ENCODE measurements at regions of chr3 and their contacts with region 1.

Region 1: GRCh38 chr3:28334552-28334951 is 14.0 kb upstream of the ZCWPW2 start:
- DNase-seq: no peak
- H3K4me3 ChIP-seq: no peak overlapping the region
- H3K4me3 Mint-ChIP-seq: no peak overlapping the region
- H3K27ac ChIP-seq: no peak overlapping the region
- H3K27ac Mint-ChIP-seq: peak overlapping the region in 2 of 8 donors; percentile 13 to 64
- H3K4me1 ChIP-seq: peaks cover 6% of the 10 kb centered on the region
- H3K4me1 Mint-ChIP-seq: peaks cover 5 to 25% (median 25%) of the 10 kb centered on the region in 3 donors
- H3K27me3 ChIP-seq: no peaks in the 10 kb centered on the region
- H3K27me3 Mint-ChIP-seq: no peaks in the 10 kb centered on the region

Region 2: DNA sequence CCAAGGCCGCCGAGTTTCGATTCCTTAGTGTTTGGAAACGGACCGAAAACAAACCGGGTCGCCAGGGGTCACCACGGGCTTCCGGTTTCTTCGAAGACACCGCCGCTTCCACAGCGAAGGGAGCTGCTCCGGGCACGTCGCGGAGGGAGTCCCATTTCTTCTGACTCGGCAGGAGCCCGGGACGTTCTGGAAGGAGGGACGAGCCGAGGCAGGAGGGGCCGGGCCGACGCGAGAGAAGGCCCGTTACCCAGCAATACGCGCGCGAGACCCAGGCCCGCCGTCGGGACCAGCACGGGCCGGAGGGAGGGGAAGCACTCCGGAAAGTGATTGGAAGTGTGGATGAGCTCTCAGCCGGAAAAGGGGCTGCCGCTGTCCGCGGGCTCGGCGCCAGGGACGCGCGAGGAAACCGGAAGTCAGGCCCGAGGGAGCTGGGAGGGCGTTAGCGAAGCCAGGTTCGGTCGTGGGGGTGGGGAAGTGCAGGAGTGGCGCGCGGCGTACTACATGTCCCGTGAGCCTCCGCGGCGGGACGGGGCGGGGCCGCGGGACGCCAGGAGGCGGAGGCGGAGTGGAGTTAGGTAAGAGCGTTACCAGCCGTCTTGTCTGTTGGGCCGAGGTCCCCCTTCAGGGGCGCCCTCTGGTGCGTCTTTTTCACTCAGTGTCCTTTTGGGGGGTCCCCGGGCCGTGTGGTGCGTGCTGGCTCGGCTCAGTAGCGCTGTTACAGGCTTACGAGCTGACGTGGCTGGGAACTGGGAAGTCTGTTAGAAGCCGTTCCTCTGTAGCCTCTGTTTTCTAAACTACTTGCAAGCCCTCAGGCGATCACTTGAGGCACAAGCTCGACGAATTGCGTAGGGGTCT is 14.3 kb after region 1 on chr3 and contains the starts of genes AZI2 and ZCWPW2:
- CTCF ChIA-PET with region 1: interaction called, 19 read pairs
- POLR2A ChIA-PET with region 1: no interaction called
- DNase-seq: peak; percentile 87 to 95 (median 90)
- H3K4me3 ChIP-seq: peak within 1 kb of the TSS; percentile 92
- H3K4me3 Mint-ChIP-seq: peak within 1 kb of the TSS; percentile 96 to 100 (median 98)
- H3K27ac ChIP-seq: peak within 1 kb of the TSS; percentile 97
- H3K27ac Mint-ChIP-seq: peak within 1 kb of the TSS; percentile 95 to 100 (median 99)
- H3K4me1 ChIP-seq: peaks cover 34% of the 10 kb centered on the region
- H3K4me1 Mint-ChIP-seq: peaks cover 55 to 74% (median 68%) of the 10 kb centered on the region in 3 donors
- H3K27me3 ChIP-seq: no peaks in the 10 kb centered on the region
- H3K27me3 Mint-ChIP-seq: no peaks in the 10 kb centered on the region
- total RNA-seq, gene AZI2: 34.5 to 36.4 TPM
- total RNA-seq, gene ZCWPW2: 0.20 to 0.27 TPM

Region 3: GRCh38 chr3:28376424-28376823 is 41.9 kb after region 1 on chr3:
- CTCF ChIA-PET with region 1: no interaction called
- POLR2A ChIA-PET with region 1: no interaction called
- DNase-seq: no peak
- H3K4me3 ChIP-seq: no peak overlapping the region
- H3K4me3 Mint-ChIP-seq: no peak overlapping the region
- H3K27ac ChIP-seq: no peak overlapping the region
- H3K27ac Mint-ChIP-seq: no peak overlapping the region
- H3K4me1 ChIP-seq: no peaks in the 10 kb centered on the region
- H3K4me1 Mint-ChIP-seq: no peaks in the 10 kb centered on the region
- H3K27me3 ChIP-seq: no peaks in the 10 kb centered on the region
- H3K27me3 Mint-ChIP-seq: peaks cover 4 to 34% of the 10 kb centered on the region in 2 donors

Region 4: DNA sequence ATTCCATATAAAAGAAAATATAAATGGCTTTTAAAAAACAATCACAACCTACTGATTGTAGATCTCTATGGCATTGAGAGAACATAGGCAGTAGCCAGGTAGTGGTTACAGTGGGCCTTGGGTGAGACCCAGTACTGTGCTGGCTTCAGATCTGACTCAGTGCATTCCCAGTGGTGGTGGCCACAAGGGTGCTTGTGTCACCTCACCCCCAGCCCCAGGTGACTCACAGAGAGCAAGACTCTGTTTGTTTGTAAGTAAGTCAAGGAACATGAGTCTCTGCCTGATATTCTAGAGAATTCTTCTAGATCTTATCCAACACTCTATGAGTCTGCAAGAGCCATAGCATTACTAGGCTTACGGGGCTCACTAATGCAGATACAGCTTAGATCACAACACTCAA is 132.9 kb after region 1 on chr3:
- CTCF ChIA-PET with region 1: no interaction called
- POLR2A ChIA-PET with region 1: no interaction called
- DNase-seq: no peak
- H3K4me3 ChIP-seq: no peak overlapping the region
- H3K4me3 Mint-ChIP-seq: no peak overlapping the region
- H3K27ac ChIP-seq: no peak overlapping the region
- H3K27ac Mint-ChIP-seq: no peak overlapping the region
- H3K4me1 ChIP-seq: no peaks in the 10 kb centered on the region
- H3K4me1 Mint-ChIP-seq: no peaks in the 10 kb centered on the region
- H3K27me3 ChIP-seq: no peaks in the 10 kb centered on the region
- H3K27me3 Mint-ChIP-seq: peaks cover 3 to 16% of the 10 kb centered on the region in 2 donors